PC-3 (cell line): ENCODE measurements at regions of chr10 and their contacts with region 1.

Region 1: DNA sequence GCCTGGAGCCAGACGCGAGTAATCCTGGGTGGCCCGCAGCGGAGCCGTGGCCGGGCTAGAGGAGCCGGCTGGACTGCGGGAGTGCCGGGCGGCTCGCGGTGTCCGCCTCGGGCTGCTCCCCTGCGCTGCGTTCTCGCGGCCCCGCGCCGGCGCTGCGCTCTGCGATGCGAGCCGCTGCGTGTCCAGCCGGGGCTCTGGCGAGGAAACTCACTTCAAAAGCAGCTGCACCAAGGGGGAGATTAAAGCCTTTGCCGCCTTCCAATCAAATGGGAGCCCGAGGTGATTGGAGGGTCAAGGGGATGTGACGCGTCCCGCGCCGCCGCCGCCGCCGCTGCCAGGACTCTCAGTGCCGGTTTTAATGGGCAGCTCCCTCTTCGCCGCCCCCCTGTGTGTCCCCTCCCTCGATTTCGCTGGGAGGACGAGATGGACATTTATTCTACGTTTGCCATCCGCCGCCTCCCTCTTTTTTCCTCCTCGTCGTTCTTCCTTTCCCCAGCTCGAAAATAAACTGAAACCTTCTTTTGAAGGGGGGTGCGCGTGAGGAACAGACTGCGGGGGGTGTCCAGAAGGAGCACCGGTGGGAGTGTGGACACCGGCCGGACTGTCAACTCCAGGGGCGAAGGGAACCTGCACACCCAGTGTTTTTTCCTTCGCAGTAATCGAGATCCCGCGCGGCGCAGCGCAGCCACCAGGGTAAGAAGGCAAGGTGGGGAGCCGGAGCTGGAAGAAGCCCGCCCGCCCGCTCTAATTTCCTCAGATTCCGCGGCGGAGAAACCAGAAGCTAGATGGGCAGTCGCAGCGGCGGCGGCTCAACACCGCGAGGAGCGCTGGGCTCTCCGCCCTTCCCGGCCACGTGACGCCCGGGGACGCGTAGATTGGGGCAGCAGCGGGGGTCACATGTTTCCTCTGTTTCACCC is at the start of gene ZNF503:
- DNase-seq: peak; percentile 100
- ATAC-seq: peak; percentile 39
- H3K4me3 ChIP-seq: peak within 1 kb of the TSS; percentile 79
- H3K27ac ChIP-seq: peak within 1 kb of the TSS; percentile 81
- H3K4me1 ChIP-seq: peaks cover 15% of the 10 kb centered on the region
- H3K27me3 ChIP-seq: peaks cover 96% of the 10 kb centered on the region
- CTCF ChIP-seq: 0 out of 2 replicates have a peak, but pooled peaks have one; percentile 24
- total RNA-seq, gene ZNF503: 42.3 and 72.1 TPM in 2 replicates

Region 2: DNA sequence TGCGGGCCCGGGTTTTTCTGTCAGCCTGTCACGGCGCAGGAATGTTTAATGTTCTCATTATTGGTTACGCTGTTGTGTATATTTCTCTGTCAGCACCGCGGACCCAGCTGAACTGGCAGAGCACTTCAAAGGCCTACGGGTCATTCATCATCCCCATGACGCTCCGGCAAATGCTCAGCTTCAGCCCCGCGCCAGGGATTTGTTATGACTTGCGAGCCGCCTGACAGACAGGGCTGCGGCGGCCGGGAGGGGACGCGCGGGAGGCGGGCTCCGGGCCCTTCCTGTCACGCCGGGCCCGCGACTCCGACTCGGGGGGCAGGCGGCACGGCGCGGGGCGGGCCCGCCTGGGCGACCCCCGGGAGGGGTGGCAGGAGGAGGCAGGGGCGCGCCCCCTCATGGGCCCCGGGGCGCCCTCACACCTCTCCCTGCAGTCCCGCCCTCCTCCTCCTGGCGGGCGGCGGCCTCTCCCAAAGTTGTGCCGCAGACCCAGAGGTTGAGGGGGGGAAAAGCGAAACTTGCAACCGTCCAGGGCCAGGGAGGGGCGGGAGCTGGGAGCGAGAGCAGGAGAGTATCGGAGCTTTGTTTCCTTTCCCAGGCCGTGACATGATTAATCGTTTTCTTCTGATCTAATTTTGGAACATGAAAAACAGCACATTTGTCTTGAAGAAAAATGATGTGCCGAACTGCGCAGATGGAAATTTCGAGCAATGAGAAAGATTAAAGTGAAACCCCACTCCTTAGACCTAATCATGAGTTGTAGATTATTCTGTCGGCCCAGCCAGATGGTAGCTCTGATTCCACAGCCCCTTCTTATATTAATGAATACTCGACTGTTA is 106.7 kb before region 1 on chr10:
- CTCF ChIA-PET with region 1: no interaction called
- POLR2A ChIA-PET with region 1: interaction called, 11 read pairs
- intact Hi-C with region 1: no loop called
- DNase-seq: peak; percentile 99
- ATAC-seq: peak; percentile 90
- H3K4me3 ChIP-seq: peak overlapping the region; percentile 66
- H3K27ac ChIP-seq: peak overlapping the region; percentile 6
- H3K4me1 ChIP-seq: peaks cover 19% of the 10 kb centered on the region
- H3K27me3 ChIP-seq: no peaks in the 10 kb centered on the region; the same call in 1 of the 2 replicates
- CTCF ChIP-seq: peak; percentile 65

Region 3: GRCh38 chr10:75350791-75351190 is 51.0 kb before region 1 on chr10:
- CTCF ChIA-PET with region 1: no interaction called
- POLR2A ChIA-PET with region 1: no interaction called
- intact Hi-C with region 1: no loop called
- DNase-seq: peak; percentile 91
- ATAC-seq: peak; percentile 86
- H3K4me3 ChIP-seq: no peak overlapping the region
- H3K27ac ChIP-seq: no peak overlapping the region
- H3K4me1 ChIP-seq: no peaks in the 10 kb centered on the region
- H3K27me3 ChIP-seq: 0 out of 2 replicates have a peak, but pooled peaks cover 10% of the 10 kb centered on the region
- CTCF ChIP-seq: peak; percentile 38; the same call in 1 of the 2 replicates

Region 4: DNA sequence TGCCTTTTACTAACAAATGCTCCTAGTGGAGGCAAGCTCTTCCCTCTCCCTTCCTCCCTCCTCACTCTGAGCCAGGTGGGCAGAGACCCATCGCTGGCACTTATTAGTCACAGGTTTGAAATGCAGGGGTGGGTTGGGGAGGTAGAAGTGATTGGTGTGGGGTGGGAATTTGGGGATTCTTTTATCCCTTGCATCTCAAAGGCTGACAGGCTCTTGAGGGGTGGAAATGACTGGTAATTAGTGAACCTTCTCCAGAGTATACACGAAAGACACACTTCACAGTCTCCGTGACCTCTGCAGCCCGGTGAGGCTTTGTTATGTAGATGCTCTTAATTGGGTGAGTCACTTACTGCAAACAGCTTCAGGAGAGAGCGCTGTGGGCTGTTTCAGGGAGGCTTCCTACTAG is 15.7 kb after region 1 on chr10:
- CTCF ChIA-PET with region 1: no interaction called
- POLR2A ChIA-PET with region 1: no interaction called
- intact Hi-C with region 1: no loop called
- DNase-seq: peak; percentile 69
- ATAC-seq: peak; percentile 80
- H3K4me3 ChIP-seq: no peak overlapping the region
- H3K27ac ChIP-seq: no peak overlapping the region
- H3K4me1 ChIP-seq: peaks cover 11% of the 10 kb centered on the region
- H3K27me3 ChIP-seq: peaks cover 15% of the 10 kb centered on the region; the same call in 1 of the 2 replicates
- CTCF ChIP-seq: no peak

Region 5: DNA sequence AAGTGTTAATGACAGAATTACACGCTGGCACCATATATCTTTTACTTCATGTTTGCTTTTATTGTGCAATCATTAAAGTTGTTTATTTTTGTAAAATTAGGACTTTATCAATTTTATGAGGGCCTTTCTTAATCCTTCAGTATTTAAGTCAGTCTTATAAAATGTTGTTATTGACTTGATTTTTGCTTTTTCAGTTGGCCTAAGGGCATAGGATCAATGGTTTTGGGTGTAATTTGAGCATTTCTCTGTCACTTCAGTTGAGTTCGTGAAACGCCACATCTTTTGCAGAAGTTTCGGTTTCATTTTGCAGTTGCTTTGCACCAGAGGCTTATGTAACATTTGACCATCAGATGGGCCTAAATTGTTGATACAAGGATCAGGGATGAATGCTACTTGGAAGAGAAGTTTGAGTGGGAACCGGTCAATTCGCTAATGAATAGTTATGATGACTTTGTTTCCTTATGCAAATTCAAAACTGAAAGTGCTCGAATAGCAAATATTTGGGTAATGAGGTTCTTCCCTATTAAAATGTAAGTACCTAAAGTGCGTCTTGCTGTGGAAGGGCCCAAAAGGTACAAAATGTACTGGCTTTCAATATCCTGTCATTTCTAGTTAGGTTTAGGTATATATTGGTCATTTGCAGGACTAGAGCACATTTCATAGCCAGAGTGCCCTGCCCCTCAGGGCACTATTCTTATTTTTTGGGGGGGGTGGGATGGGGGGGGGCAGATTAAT is 370.5 kb after region 1 on chr10:
- CTCF ChIA-PET with region 1: no interaction called
- POLR2A ChIA-PET with region 1: interaction called, 9 read pairs
- intact Hi-C with region 1: loop called (anchors 1 kb)
- DNase-seq: peak; percentile 68
- ATAC-seq: no peak
- H3K4me3 ChIP-seq: peak overlapping the region; percentile 52
- H3K27ac ChIP-seq: peak overlapping the region; percentile 76
- H3K4me1 ChIP-seq: peaks cover 48% of the 10 kb centered on the region
- H3K27me3 ChIP-seq: peaks cover 17% of the 10 kb centered on the region; the same call in 1 of the 2 replicates
- CTCF ChIP-seq: no peak

Region 6: GRCh38 chr10:76113959-76114358 is 712.1 kb after region 1 on chr10:
- CTCF ChIA-PET with region 1: no interaction called
- POLR2A ChIA-PET with region 1: no interaction called
- intact Hi-C with region 1: loop called (anchors 10 kb)
- DNase-seq: peak; percentile 98
- ATAC-seq: peak; percentile 76
- H3K4me3 ChIP-seq: peak overlapping the region; percentile 0; the same call in 1 of the 2 replicates
- H3K27ac ChIP-seq: peak overlapping the region; percentile 23
- H3K4me1 ChIP-seq: peaks cover 41% of the 10 kb centered on the region
- H3K27me3 ChIP-seq: peaks cover 51% of the 10 kb centered on the region
- CTCF ChIP-seq: no peak

Region 7: GRCh38 chr10:76984559-76985443 is 1583.0 kb after region 1 on chr10:
- CTCF ChIA-PET with region 1: no interaction called
- POLR2A ChIA-PET with region 1: no interaction called
- intact Hi-C with region 1: loop called (anchors 2 kb)
- DNase-seq: peak; percentile 100
- ATAC-seq: peak; percentile 95
- H3K4me3 ChIP-seq: no peak overlapping the region
- H3K27ac ChIP-seq: no peak overlapping the region
- H3K4me1 ChIP-seq: peaks cover 18% of the 10 kb centered on the region
- H3K27me3 ChIP-seq: no peaks in the 10 kb centered on the region
- CTCF ChIP-seq: peak; percentile 100